Activated T-helper 1 cell treated with anti-CD3 and anti-CD28 coated beads, Interleukin-12 subunit alpha, Interleukin-12 subunit beta, Interleukin-2, Interleukin-4 antibody, amounts not matched to agents 30 ng/mL and 10 ng/mL and 1 ng/mL, durations not matched to agents 14 hours and 24 hours and 36 hours (primary cell): ENCODE measurements at regions of chr1 and their contacts with region 1.

Region 1: DNA sequence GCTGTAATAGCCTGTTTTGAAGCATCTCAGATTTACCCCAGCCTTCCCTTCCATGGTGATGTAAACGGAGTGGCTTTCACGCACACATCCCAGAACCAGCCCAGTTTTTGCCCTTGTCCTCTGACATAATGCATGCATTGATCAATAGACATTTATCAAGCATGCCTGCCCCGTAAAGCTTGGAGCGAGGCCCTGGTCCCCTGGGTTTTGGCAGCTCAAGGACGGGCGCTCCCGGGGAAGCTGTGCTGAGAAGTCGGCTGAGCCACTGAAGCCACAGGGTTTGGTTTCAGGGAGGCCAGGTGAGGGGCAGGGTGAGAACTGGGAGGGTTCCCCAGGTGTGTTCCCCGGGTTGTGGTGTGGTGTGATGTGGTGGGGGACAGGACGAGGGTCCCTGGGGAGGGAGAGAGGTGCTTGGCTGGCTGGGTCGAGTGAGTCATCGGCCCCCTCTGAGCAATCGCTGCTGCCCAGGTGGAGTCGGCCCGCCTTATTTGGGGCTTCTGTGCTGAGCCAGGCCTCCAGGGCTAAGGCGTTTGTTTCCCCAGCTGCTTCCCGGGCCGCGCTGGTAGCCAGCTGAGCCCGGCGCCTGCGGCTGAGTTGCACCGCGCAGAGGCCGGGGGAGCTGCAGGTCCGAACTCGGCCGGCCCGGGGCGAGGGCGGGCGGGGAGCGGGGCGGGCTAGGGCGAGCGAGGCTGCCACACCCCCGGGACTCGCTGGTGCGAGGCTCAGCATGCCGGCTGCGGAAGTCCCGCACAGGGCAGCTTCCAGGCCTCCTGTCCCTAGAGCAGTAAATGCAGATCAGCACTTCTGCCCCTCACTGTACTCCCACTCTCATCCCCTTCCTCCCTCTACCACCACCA is 23.6 kb downstream of the ATP2B4 start:
- DNase-seq: peak; percentile 56
- H3K4me3 Mint-ChIP-seq: peak overlapping the region; percentile 77
- H3K27ac Mint-ChIP-seq: peak overlapping the region; percentile 98
- H3K4me1 Mint-ChIP-seq: peaks cover 78% of the 10 kb centered on the region
- H3K27me3 Mint-ChIP-seq: no peaks in the 10 kb centered on the region

Region 2: DNA sequence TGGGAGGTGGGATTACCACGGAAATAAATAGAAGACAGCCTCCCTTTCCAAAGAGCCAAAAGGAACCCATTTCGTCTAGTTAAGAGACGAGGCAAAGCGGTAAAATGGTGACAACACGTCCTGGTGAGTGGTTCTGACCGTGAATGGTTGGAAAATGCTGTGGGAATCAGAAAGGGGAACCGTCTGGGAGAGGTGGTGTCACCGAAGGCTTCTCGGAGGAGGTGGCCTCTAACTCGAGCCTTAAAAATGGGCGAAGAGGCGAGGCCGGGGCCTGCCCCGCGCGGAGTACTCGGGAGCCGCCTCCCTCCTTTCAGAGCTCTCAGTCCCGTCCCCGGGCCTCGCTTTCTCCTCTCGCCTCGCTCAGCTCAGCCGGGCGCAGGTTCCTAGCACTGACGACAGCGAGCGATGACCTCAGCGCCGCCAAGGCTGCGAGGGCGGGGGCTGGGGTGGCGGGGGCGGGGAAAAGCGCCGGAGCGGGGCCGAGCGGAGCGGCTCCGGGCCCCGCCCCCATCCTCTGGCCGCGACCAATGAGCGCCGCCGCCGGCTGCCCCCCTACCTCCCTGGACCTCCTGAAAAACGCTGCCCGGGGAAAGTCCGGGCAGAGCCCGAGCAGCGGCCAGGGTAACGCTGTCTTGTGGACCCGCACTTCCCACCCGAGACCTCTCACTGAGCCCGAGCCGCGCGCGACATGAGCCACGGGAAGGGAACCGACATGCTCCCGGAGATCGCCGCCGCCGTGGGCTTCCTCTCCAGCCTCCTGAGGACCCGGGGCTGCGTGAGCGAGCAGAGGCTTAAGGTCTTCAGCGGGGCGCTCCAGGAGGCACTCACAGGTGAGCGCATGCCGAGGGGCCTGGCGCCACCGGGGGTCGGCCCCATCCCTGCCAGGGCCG is 345.1 kb before region 1 on chr1 and contains the start of gene BTG2:
- intact Hi-C with region 1: loop called (anchors 1 kb)
- DNase-seq: peak; percentile 89
- H3K4me3 Mint-ChIP-seq: peak within 1 kb of the TSS; percentile 92
- H3K27ac Mint-ChIP-seq: peak within 1 kb of the TSS; percentile 93
- H3K4me1 Mint-ChIP-seq: peaks cover 61% of the 10 kb centered on the region
- H3K27me3 Mint-ChIP-seq: no peaks in the 10 kb centered on the region
- total RNA-seq, gene BTG2: 137 and 139 TPM in 2 replicates

Region 3: DNA sequence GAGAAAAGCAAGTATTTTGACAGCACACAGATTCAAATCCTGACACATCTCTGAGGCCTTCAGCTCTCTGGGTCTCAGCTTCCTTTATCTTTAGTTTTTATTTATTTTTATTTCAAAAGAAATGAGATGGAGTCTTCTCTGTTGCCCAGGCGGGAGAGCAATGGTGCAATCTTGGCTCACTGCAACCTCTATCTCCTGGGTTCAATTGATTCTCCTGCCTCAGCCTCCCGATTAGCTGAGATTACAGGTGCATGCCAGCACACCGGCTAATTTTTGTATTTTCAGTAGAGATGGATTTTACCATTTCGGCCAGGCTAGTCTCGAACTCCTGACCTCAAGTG is 42.7 kb before region 1 on chr1:
- intact Hi-C with region 1: loop called (anchors 1 kb)
- DNase-seq: no peak
- H3K4me3 Mint-ChIP-seq: no peak overlapping the region
- H3K27ac Mint-ChIP-seq: peak overlapping the region; percentile 99
- H3K4me1 Mint-ChIP-seq: peaks cover 52% of the 10 kb centered on the region
- H3K27me3 Mint-ChIP-seq: no peaks in the 10 kb centered on the region

Region 4: DNA sequence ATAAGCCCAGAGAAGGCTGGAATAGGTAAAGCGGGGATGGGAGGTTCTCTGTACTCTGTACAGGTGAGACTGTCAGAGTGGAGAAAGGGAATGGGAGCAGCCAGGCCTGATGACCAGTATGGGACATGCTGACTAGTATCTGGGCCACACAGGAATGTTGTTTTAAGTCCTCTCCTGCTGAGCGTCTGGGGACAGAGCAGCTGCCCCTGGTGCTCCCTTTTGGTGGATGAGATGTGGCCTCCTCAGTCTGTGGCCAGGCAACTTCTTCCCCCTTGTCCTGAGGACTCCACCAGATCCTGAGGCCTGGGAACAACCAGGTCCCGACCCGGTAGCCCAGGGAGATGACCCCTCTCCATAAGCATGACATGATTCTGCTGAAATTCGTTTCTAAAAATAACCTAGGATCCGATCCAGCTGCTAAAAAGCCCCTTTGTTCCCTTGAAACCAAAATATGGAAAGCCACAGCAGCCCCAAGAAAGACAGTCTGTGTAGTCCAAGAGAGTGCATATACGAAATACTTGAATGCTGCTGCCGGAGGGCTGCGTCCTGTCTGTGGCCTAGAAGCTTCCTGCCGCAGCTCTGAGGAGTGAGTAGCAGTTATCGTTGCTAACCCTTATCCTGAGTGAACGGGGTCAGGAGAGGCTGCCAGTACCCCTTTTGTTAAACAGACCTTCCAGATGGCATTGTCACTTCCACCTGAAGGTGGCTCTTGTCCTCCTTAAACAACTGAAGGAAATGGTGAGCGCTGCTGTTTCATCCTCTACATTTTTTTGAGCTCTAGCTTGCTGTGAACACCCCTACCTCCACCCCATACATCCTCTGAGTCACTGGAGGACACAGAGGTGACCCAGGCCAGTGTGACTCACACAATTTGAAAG is 23.6 kb after region 1 on chr1:
- intact Hi-C with region 1: loop called (anchors 1 kb)
- DNase-seq: peak; percentile 71
- H3K4me3 Mint-ChIP-seq: peak overlapping the region; percentile 70
- H3K27ac Mint-ChIP-seq: peak overlapping the region; percentile 92
- H3K4me1 Mint-ChIP-seq: peaks cover 56% of the 10 kb centered on the region
- H3K27me3 Mint-ChIP-seq: no peaks in the 10 kb centered on the region

Region 5: DNA sequence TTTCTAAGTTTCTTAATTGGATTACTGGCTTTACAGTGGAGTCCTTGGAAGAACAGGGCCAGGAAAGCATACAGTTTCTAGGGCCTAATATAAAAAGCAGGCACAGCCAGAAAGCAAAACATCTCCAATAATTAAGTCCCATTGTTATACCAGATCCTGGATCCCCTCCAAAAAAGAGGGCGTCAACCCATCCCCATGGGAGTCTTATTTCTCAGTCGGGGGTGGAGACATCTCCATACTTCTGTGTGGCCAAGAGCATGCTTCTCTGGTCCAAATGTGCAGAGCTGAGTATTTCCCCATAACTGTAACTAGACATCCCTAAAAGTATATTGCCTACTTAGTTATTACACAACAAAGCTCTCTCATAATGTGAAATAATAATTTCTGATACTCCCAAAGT is 318.5 kb after region 1 on chr1:
- intact Hi-C with region 1: no loop called
- DNase-seq: no peak
- H3K4me3 Mint-ChIP-seq: no peak overlapping the region
- H3K27ac Mint-ChIP-seq: no peak overlapping the region
- H3K4me1 Mint-ChIP-seq: no peaks in the 10 kb centered on the region
- H3K27me3 Mint-ChIP-seq: no peaks in the 10 kb centered on the region